ENCODE measurements at regions of chrX and their contacts with region 1.

Region 1: DNA sequence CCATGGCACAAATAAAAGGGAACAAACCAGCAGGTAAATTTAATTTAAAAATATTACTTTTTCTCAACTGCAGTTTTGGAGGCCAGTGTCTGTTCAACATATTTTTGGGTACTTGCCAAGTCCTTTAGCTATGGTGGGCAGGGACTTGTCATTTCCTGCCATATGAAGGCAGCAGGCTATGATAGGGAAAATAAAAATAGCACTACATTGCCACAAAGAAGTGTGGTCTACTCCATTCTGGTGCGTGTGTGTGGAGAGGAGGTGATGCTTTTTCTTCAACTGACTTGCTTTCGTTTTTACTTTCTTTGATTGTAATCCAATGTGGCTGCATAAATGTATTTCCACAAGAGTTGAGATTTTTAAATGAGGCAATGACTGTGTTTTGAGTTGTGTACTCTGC is 17.2 kb downstream of the GPR174 start:
- DNase-seq: no peak
- ATAC-seq: peak in 6 of 8 donors; percentile 38 to 72 (median 64)
- H3K4me3 ChIP-seq: peak overlapping the region in 6 of 10 donors; percentile 3 to 40 (median 26)
- H3K27ac ChIP-seq: peak overlapping the region in 5 of 10 donors; percentile 58 to 77 (median 64)
- H3K4me1 ChIP-seq: peaks cover 0 to 5% (median 0%) of the 10 kb centered on the region in 9 donors
- H3K27me3 ChIP-seq: no peaks in the 10 kb centered on the region
- CTCF ChIP-seq: no peak

Region 2: GRCh38 chrX:79263550-79263949 is 101.9 kb after region 1 on chrX:
- intact Hi-C with region 1: loop called in 1 of 10 experiments (anchors 5 kb)
- DNase-seq: no peak
- ATAC-seq: no peak
- H3K4me3 ChIP-seq: no peak overlapping the region
- H3K27ac ChIP-seq: no peak overlapping the region
- H3K4me1 ChIP-seq: peaks cover 0 to 22% (median 0%) of the 10 kb centered on the region in 9 donors
- H3K27me3 ChIP-seq: peaks cover 0 to 7% (median 0%) of the 10 kb centered on the region in 7 donors
- CTCF ChIP-seq: no peak

Measured in heart right ventricle (tissue), 16 donors.